Right cardiac atrium (tissue), 5 donors: ENCODE measurements at regions of chrX and their contacts with region 1.

Region 1: GRCh38 chrX:24081661-24082264 is 27.0 kb downstream of the EIF2S3 start:
- DNase-seq: peak; percentile 58 to 81 (median 78)
- ATAC-seq: peak; percentile 70 to 77
- H3K4me3 ChIP-seq: no peak overlapping the region
- H3K27ac ChIP-seq: no peak overlapping the region
- H3K4me1 ChIP-seq: no peaks in the 10 kb centered on the region
- H3K27me3 ChIP-seq: no peaks in the 10 kb centered on the region

Region 2: GRCh38 chrX:24241822-24242648 is 160.3 kb after region 1 on chrX:
- intact Hi-C with region 1: loop called in 2 of 4 experiments (anchors 5 to 10 kb)
- DNase-seq: no peak
- ATAC-seq: peak; percentile 43 to 45
- H3K4me3 ChIP-seq: no peak overlapping the region
- H3K27ac ChIP-seq: no peak overlapping the region
- H3K4me1 ChIP-seq: no peaks in the 10 kb centered on the region
- H3K27me3 ChIP-seq: no peaks in the 10 kb centered on the region